BJ (cell line): ENCODE measurements at regions of chr3 and their contacts with region 1.

Region 1: DNA sequence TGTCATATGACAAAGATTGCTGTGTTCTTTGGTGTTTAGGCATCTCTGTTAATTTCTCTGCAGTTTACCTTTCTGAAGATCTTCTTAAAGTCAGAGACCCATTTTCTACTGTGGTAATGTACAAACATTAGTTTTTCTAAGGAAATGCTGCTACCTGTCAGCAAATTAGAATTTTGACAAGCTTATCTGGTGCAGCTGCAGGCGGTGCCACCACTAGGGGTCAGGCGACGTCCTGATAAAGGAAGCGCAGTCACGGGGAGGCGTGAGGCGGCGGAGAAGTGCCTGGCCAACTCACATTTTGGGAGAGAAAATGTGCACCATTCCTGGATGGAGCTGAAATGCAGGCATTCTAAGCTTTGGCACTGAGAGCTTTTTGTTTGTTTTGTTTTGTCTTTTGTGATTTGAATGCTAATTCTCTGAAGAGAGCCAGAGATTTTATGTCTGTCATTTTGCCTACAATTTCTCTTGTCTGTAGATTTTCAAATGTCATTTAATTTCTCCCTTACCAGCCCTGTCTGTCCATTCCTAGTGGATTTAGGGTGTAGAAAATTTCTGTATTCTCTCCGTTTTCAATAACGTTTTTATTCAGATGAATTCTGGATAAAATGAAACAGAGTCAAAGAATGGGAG is 24.9 kb upstream of the SIAH2 start:
- DNase-seq: no peak
- H3K4me3 ChIP-seq: no peak overlapping the region
- H3K27me3 ChIP-seq: peaks cover 1% of the 10 kb centered on the region
- CTCF ChIP-seq: peak; percentile 93

Region 2: DNA sequence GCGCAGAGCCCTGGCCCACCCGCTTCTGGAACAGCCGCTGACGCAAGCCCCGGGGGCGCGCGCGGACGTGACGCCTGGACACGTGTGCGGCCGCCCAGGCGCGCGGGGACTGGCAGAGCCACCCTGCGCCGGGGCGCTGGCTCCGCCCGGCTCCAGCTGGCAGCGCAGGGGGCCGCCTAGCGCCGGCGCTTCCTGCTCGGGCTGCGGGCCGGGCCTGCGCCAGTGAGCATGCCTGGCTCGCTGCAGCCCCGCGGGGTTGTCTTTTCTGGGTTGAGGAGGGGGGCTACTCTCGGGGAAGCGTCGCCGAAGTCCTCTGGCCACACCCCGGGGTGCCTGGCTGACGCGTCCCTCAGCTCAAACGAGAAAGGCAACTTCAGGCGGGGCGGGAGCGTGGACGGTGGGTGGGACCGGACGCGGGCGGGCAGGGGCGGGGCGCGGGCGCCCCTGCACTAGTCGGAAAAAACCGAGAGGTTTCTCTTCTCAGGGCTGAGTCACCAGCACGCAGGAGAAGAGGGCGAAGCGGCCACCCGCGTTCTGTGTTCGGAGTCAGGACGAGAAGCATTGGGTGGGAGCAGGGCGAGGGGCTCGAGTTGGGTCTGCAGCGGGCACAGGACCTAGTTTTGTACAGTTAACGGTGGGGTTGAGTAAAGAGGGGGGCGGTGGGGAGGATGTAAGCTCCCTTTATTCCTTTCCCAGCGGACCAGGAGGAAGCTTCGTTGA is 24.6 kb before region 1 on chr3 and contains the start of gene SIAH2:
- CTCF ChIA-PET with region 1: interaction called, 21 read pairs
- POLR2A ChIA-PET with region 1: no interaction called
- DNase-seq: peak; percentile 78
- H3K4me3 ChIP-seq: peak within 1 kb of the TSS; percentile 59
- H3K27me3 ChIP-seq: no peaks in the 10 kb centered on the region
- CTCF ChIP-seq: no peak
- polyA plus RNA-seq, gene SIAH2: 34.2 and 39.3 TPM in 2 replicates

Region 3: DNA sequence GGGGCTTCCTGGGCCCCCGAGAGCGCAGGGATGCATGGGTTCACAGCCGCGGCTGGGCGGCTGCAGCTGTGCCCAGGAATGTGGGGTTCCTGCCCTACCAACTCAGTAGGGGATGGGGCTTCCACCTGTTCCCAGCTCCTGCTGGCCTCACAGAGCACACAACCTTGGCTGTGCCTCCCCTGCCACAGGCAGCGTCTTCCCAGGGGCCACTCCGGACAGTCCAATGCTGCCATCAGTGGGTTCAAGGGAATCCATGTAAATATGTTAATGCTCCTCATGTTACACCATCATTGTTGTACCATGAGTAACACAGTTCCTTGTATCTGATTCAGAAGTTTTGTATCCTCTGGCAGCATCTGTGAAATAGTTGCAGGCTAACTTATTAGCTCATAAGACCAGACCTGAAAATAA is 12.8 kb before region 1 on chr3:
- CTCF ChIA-PET with region 1: interaction called, 19 read pairs
- POLR2A ChIA-PET with region 1: no interaction called
- DNase-seq: no peak
- H3K4me3 ChIP-seq: no peak overlapping the region
- H3K27me3 ChIP-seq: no peaks in the 10 kb centered on the region
- CTCF ChIP-seq: no peak

Region 4: DNA sequence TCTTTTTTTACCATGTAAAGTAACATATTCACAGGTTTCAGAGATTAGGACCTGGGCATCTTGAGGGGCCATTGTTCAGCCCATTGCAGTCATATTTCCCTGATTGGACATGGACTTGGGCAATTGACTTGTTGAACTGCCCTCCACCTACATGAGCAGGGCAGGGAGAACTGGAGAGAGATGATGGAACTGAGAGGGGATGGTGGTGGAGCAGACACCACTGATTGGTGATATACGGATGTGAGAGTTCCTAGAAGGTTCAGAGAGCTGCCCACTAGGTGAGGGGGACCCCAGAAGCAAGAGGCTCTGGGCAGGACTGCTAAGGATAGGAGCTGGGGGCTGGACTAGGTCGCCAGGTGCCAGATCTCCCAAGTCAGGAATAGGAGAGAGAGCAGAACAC is 12.9 kb after region 1 on chr3:
- CTCF ChIA-PET with region 1: interaction called, 13 read pairs
- POLR2A ChIA-PET with region 1: no interaction called
- DNase-seq: no peak
- H3K4me3 ChIP-seq: no peak overlapping the region
- H3K27me3 ChIP-seq: peaks cover 6% of the 10 kb centered on the region; the same call in 1 of the 2 replicates
- CTCF ChIP-seq: no peak

Region 5: DNA sequence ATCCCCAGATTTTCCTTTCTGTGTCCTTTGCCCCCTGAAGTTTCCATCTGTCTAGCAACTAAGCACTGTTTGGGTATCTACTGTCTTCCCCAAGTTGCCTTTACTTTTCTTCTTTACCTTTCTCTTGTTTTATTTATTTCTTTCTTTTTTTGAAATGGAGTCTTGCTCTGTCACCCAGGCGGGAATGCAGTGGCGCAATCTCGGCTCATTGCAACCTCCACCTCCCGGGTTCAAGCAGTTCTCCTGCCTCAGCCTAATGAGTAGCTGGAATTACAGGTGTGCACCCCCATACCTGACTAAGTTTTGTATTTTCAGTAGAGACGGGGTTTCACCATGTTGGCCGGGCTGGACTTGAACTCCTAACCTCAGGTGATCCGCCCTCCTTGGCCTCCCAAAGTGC is 291.9 kb after region 1 on chr3:
- CTCF ChIA-PET with region 1: no interaction called
- POLR2A ChIA-PET with region 1: no interaction called
- DNase-seq: no peak
- H3K4me3 ChIP-seq: no peak overlapping the region
- H3K27me3 ChIP-seq: peaks cover 20% of the 10 kb centered on the region
- CTCF ChIP-seq: no peak